CD8-positive, alpha-beta T cell (primary cell): ENCODE measurements at regions of chr7 and their contacts with region 1.

Region 1: DNA sequence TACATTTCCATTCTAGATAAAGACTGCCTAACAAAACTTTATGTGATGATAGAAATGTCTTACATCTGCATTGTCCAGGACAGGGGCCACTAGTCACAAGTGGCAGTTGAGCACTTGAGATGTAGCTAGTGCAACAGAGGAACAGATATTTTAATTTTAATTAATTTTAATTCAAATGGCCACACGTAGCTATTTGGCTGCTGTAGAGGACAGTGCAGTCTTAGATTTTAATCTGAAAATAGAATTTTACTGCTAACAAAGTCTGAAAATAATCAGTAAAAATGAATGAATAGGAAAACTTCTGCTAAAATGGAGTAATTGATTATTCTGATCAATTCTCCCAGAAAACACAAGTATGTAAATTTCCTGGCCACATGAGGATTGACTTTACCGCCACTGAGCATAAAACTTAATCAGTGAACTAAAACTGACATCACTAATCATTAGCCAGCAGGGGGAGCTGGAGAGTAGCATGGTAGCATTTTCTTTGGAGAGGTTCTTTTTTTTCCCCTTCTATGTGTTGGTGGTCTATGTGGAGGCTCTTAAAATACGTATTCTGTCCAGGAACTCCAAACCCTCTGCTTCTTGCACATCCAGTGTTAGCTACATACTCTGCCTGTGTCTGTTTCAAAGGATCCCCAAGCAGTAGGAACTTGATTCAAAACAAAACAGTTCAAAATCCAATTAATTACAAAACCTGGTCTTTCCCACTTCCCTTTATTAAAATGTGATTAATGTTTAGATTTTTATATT is 52.1 kb downstream of the TSPAN12 start:
- DNase-seq: peak in 8 of 9 experiments; percentile 12 to 68 (median 53)
- ATAC-seq: no peak
- H3K4me3 ChIP-seq: no peak overlapping the region
- H3K4me3 Mint-ChIP-seq: no peak overlapping the region
- H3K27ac ChIP-seq: no peak overlapping the region
- H3K27ac Mint-ChIP-seq: no peak overlapping the region
- H3K4me1 ChIP-seq: no peaks in the 10 kb centered on the region
- H3K4me1 Mint-ChIP-seq: no peaks in the 10 kb centered on the region
- H3K27me3 ChIP-seq: no peaks in the 10 kb centered on the region
- H3K27me3 Mint-ChIP-seq: peaks cover 22% of the 10 kb centered on the region
- CTCF ChIP-seq: peak; percentile 90

Region 2: GRCh38 chr7:120792091-120792860 is 13.5 kb before region 1 on chr7:
- CTCF ChIA-PET with region 1: interaction called, 18 read pairs
- POLR2A ChIA-PET with region 1: no interaction called
- intact Hi-C with region 1: no loop called
- DNase-seq: peak in 8 of 9 experiments; percentile 25 to 65 (median 56)
- ATAC-seq: no peak
- H3K4me3 ChIP-seq: no peak overlapping the region
- H3K4me3 Mint-ChIP-seq: no peak overlapping the region
- H3K27ac ChIP-seq: no peak overlapping the region
- H3K27ac Mint-ChIP-seq: no peak overlapping the region
- H3K4me1 ChIP-seq: no peaks in the 10 kb centered on the region
- H3K4me1 Mint-ChIP-seq: no peaks in the 10 kb centered on the region
- H3K27me3 ChIP-seq: no peaks in the 10 kb centered on the region
- H3K27me3 Mint-ChIP-seq: peaks cover 4% of the 10 kb centered on the region
- CTCF ChIP-seq: peak; percentile 81

Region 3: DNA sequence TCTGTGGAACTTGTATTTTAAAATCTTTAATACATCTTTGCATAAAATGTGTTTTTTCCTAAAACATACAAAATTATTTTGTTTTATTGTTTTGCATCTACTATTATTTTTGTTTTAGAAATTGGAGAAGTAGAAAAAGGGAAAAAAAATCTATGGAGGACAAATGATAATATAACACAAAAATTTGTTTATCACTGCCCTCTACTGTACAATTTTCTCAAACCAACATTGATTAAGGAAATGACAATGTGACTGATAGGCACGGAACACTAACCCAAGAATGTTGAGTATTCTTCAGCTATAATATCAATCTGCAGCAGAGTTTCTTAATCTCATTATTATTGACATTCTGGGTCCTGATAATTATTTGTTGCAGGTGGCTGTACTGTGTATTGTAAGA is 135.3 kb after region 1 on chr7:
- CTCF ChIA-PET with region 1: no interaction called
- POLR2A ChIA-PET with region 1: no interaction called
- intact Hi-C with region 1: loop called (anchors 1 to 5 kb)
- DNase-seq: peak in 1 of 9 experiments; percentile 20
- ATAC-seq: no peak
- H3K4me3 ChIP-seq: no peak overlapping the region
- H3K4me3 Mint-ChIP-seq: no peak overlapping the region
- H3K27ac ChIP-seq: no peak overlapping the region
- H3K27ac Mint-ChIP-seq: no peak overlapping the region
- H3K4me1 ChIP-seq: no peaks in the 10 kb centered on the region
- H3K4me1 Mint-ChIP-seq: no peaks in the 10 kb centered on the region
- H3K27me3 ChIP-seq: no peaks in the 10 kb centered on the region
- H3K27me3 Mint-ChIP-seq: no peaks in the 10 kb centered on the region
- CTCF ChIP-seq: peak; percentile 28

Region 4: DNA sequence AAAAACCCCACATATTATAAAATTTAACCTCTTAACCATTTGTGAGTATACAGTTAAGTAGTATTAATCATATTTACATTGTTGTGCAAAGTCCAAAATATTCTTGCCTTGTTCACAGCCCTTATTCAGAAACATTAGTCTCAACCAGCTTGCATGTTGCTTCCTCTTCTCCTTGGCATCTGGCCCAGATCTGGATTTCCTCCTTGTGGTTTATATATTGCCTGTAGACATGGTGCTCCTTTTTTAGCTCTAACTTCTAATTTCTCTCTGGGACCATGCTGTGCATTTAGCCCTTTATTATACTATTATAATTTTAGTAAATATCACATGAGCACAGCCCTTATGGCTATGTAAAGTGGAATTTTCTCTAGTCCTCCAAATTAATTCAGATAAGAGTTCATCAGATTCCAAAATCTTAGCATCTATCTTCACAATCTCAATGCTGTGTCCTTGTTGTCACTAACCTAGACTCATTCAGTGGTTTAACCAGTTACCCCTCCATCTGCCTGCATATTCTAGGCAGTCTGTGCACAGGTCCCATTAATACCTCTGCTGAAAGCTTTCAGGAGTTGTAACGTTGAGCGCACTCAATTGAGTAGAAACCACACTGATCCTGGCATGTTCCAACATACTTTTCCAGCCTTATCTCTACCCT is 190.6 kb after region 1 on chr7:
- CTCF ChIA-PET with region 1: no interaction called
- POLR2A ChIA-PET with region 1: no interaction called
- intact Hi-C with region 1: no loop called
- DNase-seq: peak in 8 of 9 experiments; percentile 20 to 75 (median 56)
- ATAC-seq: peak; percentile 65
- H3K4me3 ChIP-seq: no peak overlapping the region
- H3K4me3 Mint-ChIP-seq: no peak overlapping the region
- H3K27ac ChIP-seq: no peak overlapping the region
- H3K27ac Mint-ChIP-seq: no peak overlapping the region
- H3K4me1 ChIP-seq: peaks cover 17% of the 10 kb centered on the region
- H3K4me1 Mint-ChIP-seq: peaks cover 22% of the 10 kb centered on the region
- H3K27me3 ChIP-seq: peaks cover 0 to 2% of the 10 kb centered on the region in 2 experiments
- H3K27me3 Mint-ChIP-seq: peaks cover 4% of the 10 kb centered on the region
- CTCF ChIP-seq: no peak

Region 5: GRCh38 chr7:121081327-121081936 is 275.6 kb after region 1 on chr7:
- CTCF ChIA-PET with region 1: interaction called, 15 read pairs
- POLR2A ChIA-PET with region 1: no interaction called
- intact Hi-C with region 1: loop called (anchors 1 to 2 kb)
- DNase-seq: peak in 2 of 9 experiments; percentile 48 to 61
- ATAC-seq: peak; percentile 72
- H3K4me3 ChIP-seq: no peak overlapping the region
- H3K4me3 Mint-ChIP-seq: no peak overlapping the region
- H3K27ac ChIP-seq: no peak overlapping the region
- H3K27ac Mint-ChIP-seq: no peak overlapping the region
- H3K4me1 ChIP-seq: no peaks in the 10 kb centered on the region
- H3K4me1 Mint-ChIP-seq: no peaks in the 10 kb centered on the region
- H3K27me3 ChIP-seq: no peaks in the 10 kb centered on the region
- H3K27me3 Mint-ChIP-seq: peaks cover 10% of the 10 kb centered on the region
- CTCF ChIP-seq: peak; percentile 76

Region 6: GRCh38 chr7:121107923-121108498 is 302.2 kb after region 1 on chr7:
- CTCF ChIA-PET with region 1: interaction called, 8 read pairs
- POLR2A ChIA-PET with region 1: no interaction called
- intact Hi-C with region 1: loop called (anchors 1 to 2 kb)
- DNase-seq: peak in 2 of 9 experiments; percentile 55 to 64
- ATAC-seq: peak; percentile 79
- H3K4me3 ChIP-seq: no peak overlapping the region
- H3K4me3 Mint-ChIP-seq: no peak overlapping the region
- H3K27ac ChIP-seq: no peak overlapping the region
- H3K27ac Mint-ChIP-seq: no peak overlapping the region
- H3K4me1 ChIP-seq: no peaks in the 10 kb centered on the region
- H3K4me1 Mint-ChIP-seq: no peaks in the 10 kb centered on the region
- H3K27me3 ChIP-seq: no peaks in the 10 kb centered on the region
- H3K27me3 Mint-ChIP-seq: peaks cover 9% of the 10 kb centered on the region
- CTCF ChIP-seq: peak; percentile 87